ENCODE measurements at regions of chr11 and their contacts with region 1.

Region 1: DNA sequence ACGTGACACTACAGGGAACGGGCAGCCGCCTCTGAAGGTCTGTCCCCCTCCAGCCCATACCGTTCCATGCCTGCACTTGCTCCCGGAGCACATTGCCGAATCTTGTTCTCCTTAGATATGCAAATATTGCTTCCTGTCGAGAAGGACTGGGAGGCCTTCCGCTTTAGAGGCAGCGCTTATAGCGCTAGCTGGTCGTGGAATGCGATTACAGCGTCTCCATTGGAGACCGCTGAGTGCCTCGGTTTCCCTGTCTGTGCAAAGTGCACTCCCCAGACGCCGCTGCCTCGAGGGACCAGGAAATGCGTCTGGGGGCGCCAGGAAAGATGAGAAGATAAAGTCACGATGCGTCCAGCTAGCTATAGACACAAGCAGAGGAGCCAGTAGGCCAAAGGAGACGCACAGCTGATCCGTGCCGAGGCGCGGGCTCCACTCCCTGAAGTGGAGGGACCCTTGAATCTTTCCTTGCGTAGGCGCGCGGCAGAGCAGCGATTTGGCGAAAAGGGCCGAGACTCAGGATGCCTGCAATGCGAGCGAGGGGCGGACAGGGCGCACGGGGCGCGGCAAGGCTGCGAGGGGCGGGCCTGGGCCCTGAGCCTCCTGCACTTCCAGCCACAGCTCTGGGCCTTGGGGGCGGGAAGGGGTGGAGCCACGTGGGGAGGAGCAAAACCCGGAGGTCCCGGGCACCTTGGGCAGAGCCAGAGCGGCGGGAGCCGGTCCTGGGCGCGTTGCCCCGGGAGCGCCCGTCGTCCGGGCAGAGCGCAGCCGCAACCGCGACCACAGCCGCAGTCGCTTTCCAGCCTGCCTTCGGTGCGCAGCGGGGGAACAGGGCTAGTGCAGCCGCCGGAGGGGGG is at the start of gene RASSF10:
- DNase-seq: peak; percentile 20
- H3K4me3 ChIP-seq: peak within 1 kb of the TSS in 1 of 3 experiments; percentile 5
- H3K27ac ChIP-seq: no peak within 1 kb of the TSS
- H3K4me1 ChIP-seq: peaks cover 4% of the 10 kb centered on the region
- H3K27me3 ChIP-seq: peaks cover 78 to 94% of the 10 kb centered on the region in 2 experiments
- CTCF ChIP-seq: no peak
- POLR2A ChIP-seq: no peak
- total RNA-seq, gene RASSF10: not detected in 2 replicates

Region 2: GRCh38 chr11:12888525-12889158 is 120.2 kb before region 1 on chr11:
- CTCF ChIA-PET with region 1: no interaction called
- POLR2A ChIA-PET with region 1: no interaction called
- dilution Hi-C with region 1: no loop called
- intact Hi-C with region 1: no loop called
- DNase-seq: peak; percentile 96
- H3K4me3 ChIP-seq: no peak overlapping the region
- H3K27ac ChIP-seq: no peak overlapping the region
- H3K4me1 ChIP-seq: peaks cover 9% of the 10 kb centered on the region
- H3K27me3 ChIP-seq: no peaks in the 10 kb centered on the region
- CTCF ChIP-seq: peak; percentile 82 to 86
- POLR2A ChIP-seq: no peak

Region 3: GRCh38 chr11:13105237-13105844 is 96.5 kb after region 1 on chr11:
- CTCF ChIA-PET with region 1: interaction called, 3 read pairs
- POLR2A ChIA-PET with region 1: no interaction called
- dilution Hi-C with region 1: no loop called
- intact Hi-C with region 1: loop called (anchors 5 kb)
- DNase-seq: peak; percentile 99
- H3K4me3 ChIP-seq: peak overlapping the region in 1 of 3 experiments; percentile 0
- H3K27ac ChIP-seq: peak overlapping the region; percentile 60
- H3K4me1 ChIP-seq: peaks cover 39% of the 10 kb centered on the region
- H3K27me3 ChIP-seq: no peaks in the 10 kb centered on the region
- CTCF ChIP-seq: no peak
- POLR2A ChIP-seq: peak; percentile 70